ENCODE measurements at regions of chr6 and their contacts with region 1.

Region 1: GRCh38 chr6:46989384-46989783 is 52.7 kb downstream of the ADGRF1 start:
- DNase-seq: peak in 1 of 3 donors; percentile 11
- H3K4me3 ChIP-seq: no peak overlapping the region
- H3K27ac ChIP-seq: no peak overlapping the region
- H3K4me1 ChIP-seq: peaks cover 0 to 12% (median 8%) of the 10 kb centered on the region in 4 experiments
- H3K27me3 ChIP-seq: no peaks in the 10 kb centered on the region

Region 2: GRCh38 chr6:45892696-45893245 is 1096.6 kb before region 1 on chr6:
- CTCF ChIA-PET with region 1: no interaction called
- POLR2A ChIA-PET with region 1: no interaction called
- DNase-seq: peak in 2 of 3 donors; percentile 39 to 60
- H3K4me3 ChIP-seq: no peak overlapping the region
- H3K27ac ChIP-seq: no peak overlapping the region
- H3K4me1 ChIP-seq: no peaks in the 10 kb centered on the region
- H3K27me3 ChIP-seq: no peaks in the 10 kb centered on the region

Region 3: GRCh38 chr6:46419576-46420002 is 569.8 kb before region 1 on chr6:
- CTCF ChIA-PET with region 1: interaction called, 21 read pairs
- POLR2A ChIA-PET with region 1: no interaction called
- DNase-seq: peak; percentile 66 to 83 (median 78)
- H3K4me3 ChIP-seq: no peak overlapping the region
- H3K27ac ChIP-seq: no peak overlapping the region
- H3K4me1 ChIP-seq: peaks cover 0 to 2% (median 0%) of the 10 kb centered on the region in 4 experiments
- H3K27me3 ChIP-seq: no peaks in the 10 kb centered on the region

Region 4: GRCh38 chr6:46821458-46821900 is 167.9 kb before region 1 on chr6:
- CTCF ChIA-PET with region 1: no interaction called
- POLR2A ChIA-PET with region 1: no interaction called
- DNase-seq: no peak
- H3K4me3 ChIP-seq: no peak overlapping the region
- H3K27ac ChIP-seq: no peak overlapping the region
- H3K4me1 ChIP-seq: no peaks in the 10 kb centered on the region
- H3K27me3 ChIP-seq: no peaks in the 10 kb centered on the region

Region 5: DNA sequence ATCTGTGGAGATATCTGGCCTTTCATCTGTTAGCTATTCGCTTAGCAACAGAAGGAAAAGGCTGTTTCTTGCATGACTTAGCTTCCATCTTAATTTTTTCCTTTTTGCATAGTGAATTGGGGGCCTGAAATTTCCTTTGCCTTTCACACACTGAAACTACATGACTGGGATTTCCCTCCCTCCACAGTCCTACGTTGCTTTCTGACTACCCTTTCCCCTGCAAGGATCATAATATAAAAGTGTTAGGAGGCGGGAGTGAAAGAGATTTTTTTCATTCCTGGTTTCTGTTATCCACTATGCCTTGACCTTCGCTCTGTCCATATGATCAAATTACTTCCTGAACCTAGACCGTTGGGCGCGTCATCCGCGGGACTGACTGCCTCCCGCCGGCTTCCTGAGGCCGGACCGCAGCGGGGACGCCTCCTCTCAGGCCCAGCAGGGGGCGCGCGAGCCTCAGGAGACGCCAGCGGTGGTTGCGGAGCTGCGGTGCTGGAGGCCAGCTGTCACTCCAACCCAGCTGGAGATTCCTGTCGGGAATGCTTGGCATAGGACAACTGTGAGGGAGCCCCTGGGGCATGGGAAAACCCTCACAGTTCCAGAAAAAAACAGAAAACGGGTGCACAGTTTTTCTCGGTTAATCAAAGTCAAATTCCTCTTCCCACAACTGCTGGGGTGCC is 140.6 kb before region 1 on chr6:
- CTCF ChIA-PET with region 1: interaction called, 31 read pairs
- POLR2A ChIA-PET with region 1: no interaction called
- DNase-seq: peak; percentile 52 to 66 (median 62)
- H3K4me3 ChIP-seq: peak overlapping the region in 5 of 7 experiments; percentile 35 to 63 (median 48)
- H3K27ac ChIP-seq: no peak overlapping the region
- H3K4me1 ChIP-seq: peaks cover 1 to 17% (median 4%) of the 10 kb centered on the region in 4 experiments
- H3K27me3 ChIP-seq: no peaks in the 10 kb centered on the region

Region 6: DNA sequence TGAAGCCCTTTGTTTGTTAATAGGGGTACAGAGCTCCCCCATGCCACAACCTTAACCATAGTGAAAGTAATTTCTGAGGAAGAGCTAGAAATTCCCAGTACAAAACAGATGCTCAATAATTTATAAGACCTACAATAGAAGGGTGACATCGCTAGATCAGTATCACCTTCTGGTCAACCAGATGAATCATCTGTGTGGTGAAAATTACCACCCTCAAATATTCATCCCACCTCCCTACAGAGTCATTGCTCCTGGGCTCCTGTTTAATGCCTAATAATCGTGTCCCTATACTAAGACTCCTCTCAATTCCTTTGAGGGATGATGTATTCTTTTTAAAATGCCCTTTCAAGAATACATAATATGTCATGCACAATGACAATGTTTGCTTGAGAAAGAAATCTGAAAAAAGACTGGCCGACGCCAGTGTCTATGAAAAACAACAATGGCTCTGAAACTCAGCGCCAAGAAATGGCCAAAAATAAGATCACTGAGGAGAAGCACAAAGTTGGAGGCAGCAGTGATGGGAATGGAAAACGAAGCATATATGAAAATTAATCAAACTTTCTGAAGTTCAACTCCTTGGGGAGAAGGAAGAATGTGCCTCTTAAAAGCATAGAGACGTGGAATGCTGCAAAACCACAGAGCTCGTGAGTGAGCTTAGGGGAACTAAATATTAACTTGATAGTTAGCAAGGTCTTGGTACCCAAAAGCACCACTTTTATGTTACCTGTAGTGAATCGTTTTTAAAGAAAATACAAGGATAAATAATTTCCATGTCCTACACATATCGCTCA is 56.7 kb before region 1 on chr6:
- CTCF ChIA-PET with region 1: no interaction called
- POLR2A ChIA-PET with region 1: no interaction called
- DNase-seq: no peak
- H3K4me3 ChIP-seq: no peak overlapping the region
- H3K27ac ChIP-seq: no peak overlapping the region
- H3K4me1 ChIP-seq: no peaks in the 10 kb centered on the region
- H3K27me3 ChIP-seq: no peaks in the 10 kb centered on the region

Region 7: GRCh38 chr6:47034919-47035318 is 45.5 kb after region 1 on chr6:
- CTCF ChIA-PET with region 1: interaction called, 11 read pairs
- POLR2A ChIA-PET with region 1: no interaction called
- DNase-seq: peak; percentile 29 to 84 (median 78)
- H3K4me3 ChIP-seq: peak overlapping the region in 4 of 7 experiments; percentile 12 to 51 (median 18)
- H3K27ac ChIP-seq: no peak overlapping the region
- H3K4me1 ChIP-seq: peaks cover 11 to 31% (median 22%) of the 10 kb centered on the region in 4 experiments
- H3K27me3 ChIP-seq: no peaks in the 10 kb centered on the region

Measured in common myeloid progenitor, CD34-positive (primary cell).